Activated T-helper 2 cell treated with anti-CD3 and anti-CD28 coated beads, Interferon-gamma antibody, Interleukin-2, Interleukin-4, amounts not matched to agents 10 μg/mL and 5 μg/mL and 100 μg/mL, durations not matched to agents 14 hours and 24 hours and 36 hours (primary cell): ENCODE measurements at regions of chr7 and their contacts with region 1.

Region 1: GRCh38 chr7:50664461-50664922 is 99.3 kb upstream of the DDC start:
- DNase-seq: no peak
- H3K4me3 Mint-ChIP-seq: no peak overlapping the region
- H3K27ac Mint-ChIP-seq: no peak overlapping the region
- H3K4me1 Mint-ChIP-seq: peaks cover 67% of the 10 kb centered on the region
- H3K27me3 Mint-ChIP-seq: no peaks in the 10 kb centered on the region

Region 2: DNA sequence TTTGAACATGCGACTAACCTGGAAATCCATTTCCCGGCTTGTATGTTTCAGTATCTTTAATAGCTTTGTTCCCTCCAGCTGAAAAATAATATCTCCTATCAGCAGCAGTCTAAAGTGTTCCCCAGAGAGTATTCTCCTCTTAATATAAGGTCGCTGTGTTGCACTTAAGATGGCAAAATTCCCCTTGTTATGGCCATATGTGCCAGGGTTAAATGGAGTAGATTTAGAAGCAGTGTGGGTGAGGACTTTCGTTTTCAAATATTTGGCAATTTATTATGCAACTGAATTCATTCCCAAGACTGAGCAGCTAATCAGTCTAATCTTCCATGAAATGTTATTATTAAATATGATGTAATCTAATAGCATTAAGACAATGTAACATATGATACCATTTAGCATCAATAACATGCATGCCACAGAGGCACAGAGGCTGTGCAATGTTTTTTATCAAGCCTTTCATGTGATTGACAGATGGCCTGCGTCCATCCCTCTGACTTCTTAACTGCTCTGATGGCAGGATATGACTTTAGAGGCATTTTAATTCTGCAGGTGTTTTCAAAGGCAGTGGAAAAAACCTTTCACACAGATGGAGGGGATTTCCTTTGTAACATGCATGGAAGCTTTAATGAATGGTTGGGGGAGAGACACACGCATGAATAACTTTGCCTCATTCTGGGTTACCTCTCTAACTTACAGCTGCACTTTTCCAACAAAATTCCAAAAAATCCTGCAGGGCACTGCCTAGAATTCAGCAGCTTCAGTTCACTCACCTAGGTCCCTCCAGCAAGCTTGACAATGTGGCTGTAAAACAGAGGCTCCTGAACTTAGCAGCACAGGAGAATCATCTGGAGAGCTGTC is 516.3 kb before region 1 on chr7:
- intact Hi-C with region 1: loop called (anchors 5 kb)
- DNase-seq: no peak
- H3K4me3 Mint-ChIP-seq: peak overlapping the region; percentile 22
- H3K27ac Mint-ChIP-seq: peak overlapping the region; percentile 60
- H3K4me1 Mint-ChIP-seq: peaks cover 72% of the 10 kb centered on the region
- H3K27me3 Mint-ChIP-seq: no peaks in the 10 kb centered on the region

Region 3: DNA sequence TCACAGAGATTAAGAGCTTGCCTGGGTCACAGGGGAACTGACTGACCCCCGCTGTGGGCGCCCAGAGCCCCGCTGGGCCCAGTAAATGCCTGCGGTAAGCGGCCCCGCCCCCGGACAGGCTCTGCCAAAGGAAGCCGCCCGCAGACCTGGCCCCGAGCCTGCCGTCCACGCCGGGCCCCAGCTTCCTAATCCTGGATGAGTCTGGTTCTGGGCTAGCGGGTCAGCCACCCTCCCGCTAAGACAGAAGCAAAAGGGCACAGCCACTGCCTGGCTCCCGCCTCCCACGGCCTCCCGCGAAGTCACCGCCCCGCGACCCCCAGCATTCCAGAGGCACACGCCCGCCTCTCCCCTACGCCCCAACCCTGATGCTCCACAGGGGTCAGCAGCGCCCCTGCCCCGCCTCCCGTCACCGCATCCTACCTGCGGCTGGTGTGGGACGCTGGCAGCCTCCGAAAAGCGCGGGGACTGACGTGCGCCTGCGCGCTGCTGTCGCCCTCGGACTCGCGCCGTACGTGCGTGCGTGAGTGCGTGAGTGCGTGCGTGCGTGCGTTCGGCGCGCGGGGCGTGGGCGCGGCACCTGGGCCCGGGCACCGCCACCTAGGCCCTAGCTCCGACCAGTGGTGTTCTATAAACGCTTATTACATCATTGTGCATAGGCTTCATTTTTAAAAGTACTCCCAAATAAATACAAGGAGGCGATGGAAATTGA is 214.5 kb before region 1 on chr7 and contains the start of gene FIGNL1:
- intact Hi-C with region 1: loop called (anchors 2 kb)
- DNase-seq: peak; percentile 81
- H3K4me3 Mint-ChIP-seq: peak within 1 kb of the TSS; percentile 86
- H3K27ac Mint-ChIP-seq: peak within 1 kb of the TSS; percentile 71
- H3K4me1 Mint-ChIP-seq: peaks cover 41% of the 10 kb centered on the region
- H3K27me3 Mint-ChIP-seq: no peaks in the 10 kb centered on the region
- total RNA-seq, gene FIGNL1: 40.0 and 42.5 TPM in 2 replicates

Region 4: GRCh38 chr7:50595491-50596102 is 68.9 kb before region 1 on chr7:
- intact Hi-C with region 1: loop called (anchors 5 kb)
- DNase-seq: no peak
- H3K4me3 Mint-ChIP-seq: no peak overlapping the region
- H3K27ac Mint-ChIP-seq: peak overlapping the region; percentile 75
- H3K4me1 Mint-ChIP-seq: peaks cover 58% of the 10 kb centered on the region
- H3K27me3 Mint-ChIP-seq: no peaks in the 10 kb centered on the region

Region 5: GRCh38 chr7:50826371-50827172 is 162.1 kb after region 1 on chr7:
- intact Hi-C with region 1: loop called (anchors 5 kb)
- DNase-seq: peak; percentile 40
- H3K4me3 Mint-ChIP-seq: no peak overlapping the region
- H3K27ac Mint-ChIP-seq: peak overlapping the region; percentile 71
- H3K4me1 Mint-ChIP-seq: peaks cover 27% of the 10 kb centered on the region
- H3K27me3 Mint-ChIP-seq: peaks cover 13% of the 10 kb centered on the region